Spleen (tissue), 13 donors: ENCODE measurements at regions of chr11 and their contacts with region 1.

Region 1: GRCh38 chr11:1694064-1694845 is 2.7 kb upstream of the KRTAP5-6 start:
- DNase-seq: peak; percentile 98
- H3K4me3 ChIP-seq: peak overlapping the region in 4 of 8 donors; percentile 7 to 58 (median 19)
- H3K27ac ChIP-seq: peak overlapping the region in 5 of 8 donors; percentile 17 to 66 (median 48)
- H3K4me1 ChIP-seq: peaks cover 10 to 27% (median 19%) of the 10 kb centered on the region in 6 donors
- H3K27me3 ChIP-seq: peaks cover 0 to 30% (median 4%) of the 10 kb centered on the region in 7 donors
- CTCF ChIP-seq: peak; percentile 89 to 99 (median 95)
- POLR2A ChIP-seq: no peak

Region 2: DNA sequence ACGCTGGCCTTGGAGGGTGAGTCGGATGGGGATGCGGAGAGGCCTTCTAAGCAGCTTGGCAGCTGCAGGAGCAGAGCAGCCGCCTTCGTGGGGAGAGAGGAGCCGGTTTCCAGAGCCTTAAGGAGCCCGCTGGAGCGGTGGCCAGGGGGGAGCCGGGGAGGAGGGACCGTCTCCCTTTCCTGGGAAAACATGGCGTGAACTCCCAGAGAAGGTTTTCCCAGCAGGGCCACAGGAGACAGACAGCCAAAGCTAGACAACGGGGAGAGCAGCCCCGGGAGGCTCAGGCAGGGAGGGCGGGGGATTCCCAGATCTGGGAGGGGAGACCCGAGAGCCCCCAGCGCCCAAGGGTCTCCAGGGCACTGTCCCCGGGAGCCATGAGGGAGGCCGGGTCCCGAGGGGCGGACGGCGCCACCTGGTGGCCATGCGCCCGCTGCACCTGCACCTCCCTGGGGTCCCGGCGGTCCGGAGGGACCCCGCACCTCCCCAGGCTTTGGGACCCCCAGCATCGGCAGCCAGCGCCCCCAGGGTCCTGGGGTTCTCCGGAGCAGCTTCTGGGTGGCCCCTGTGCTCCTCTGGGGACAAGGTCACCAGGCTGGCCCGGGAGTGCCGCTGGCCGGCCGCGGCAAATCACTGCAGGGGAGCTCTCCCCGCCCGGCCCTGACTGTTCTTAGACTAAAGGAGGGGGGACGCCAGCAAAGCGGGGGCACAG is 138.1 kb after region 1 on chr11:
- intact Hi-C with region 1: loop called (anchors 2 kb)
- DNase-seq: peak; percentile 92
- H3K4me3 ChIP-seq: peak overlapping the region in 3 of 8 donors; percentile 7 to 57 (median 25)
- H3K27ac ChIP-seq: peak overlapping the region in 2 of 8 donors; percentile 4 to 50
- H3K4me1 ChIP-seq: peaks cover 4 to 41% (median 17%) of the 10 kb centered on the region in 6 donors
- H3K27me3 ChIP-seq: peaks cover 0 to 53% (median 0%) of the 10 kb centered on the region in 7 donors
- CTCF ChIP-seq: peak; percentile 83 to 99 (median 97)
- POLR2A ChIP-seq: no peak

Region 3: GRCh38 chr11:2151500-2152257 is 457.4 kb after region 1 on chr11:
- intact Hi-C with region 1: loop called (anchors 10 kb)
- DNase-seq: peak; percentile 88
- H3K4me3 ChIP-seq: peak overlapping the region in 1 of 8 donors; percentile 40
- H3K27ac ChIP-seq: peak overlapping the region in 3 of 8 donors; percentile 8 to 41 (median 40)
- H3K4me1 ChIP-seq: peaks cover 7 to 13% (median 9%) of the 10 kb centered on the region in 6 donors
- H3K27me3 ChIP-seq: peaks cover 0 to 72% (median 30%) of the 10 kb centered on the region in 7 donors
- CTCF ChIP-seq: peak; percentile 62 to 92 (median 85)
- POLR2A ChIP-seq: no peak